K562 (cell line): ENCODE measurements at regions of chr16 and their contacts with region 1.

Region 1: GRCh38 chr16:3509470-3509928 is 8.7 kb downstream of the CLUAP1 start:
- DNase-seq: peak in 1 of 4 experiments; percentile 12
- ATAC-seq: no peak
- H3K4me3 ChIP-seq: no peak overlapping the region
- H3K27ac ChIP-seq: no peak overlapping the region
- H3K4me1 ChIP-seq: peaks cover 2 to 7% of the 10 kb centered on the region in 2 experiments; a peak in 4 of 5 replicates
- H3K27me3 ChIP-seq: no peaks in the 10 kb centered on the region
- CTCF ChIP-seq: no peak
- EP300 ChIP-seq: no peak
- POLR2A ChIP-seq: no peak
- RAD21 ChIP-seq: no peak

Region 2: DNA sequence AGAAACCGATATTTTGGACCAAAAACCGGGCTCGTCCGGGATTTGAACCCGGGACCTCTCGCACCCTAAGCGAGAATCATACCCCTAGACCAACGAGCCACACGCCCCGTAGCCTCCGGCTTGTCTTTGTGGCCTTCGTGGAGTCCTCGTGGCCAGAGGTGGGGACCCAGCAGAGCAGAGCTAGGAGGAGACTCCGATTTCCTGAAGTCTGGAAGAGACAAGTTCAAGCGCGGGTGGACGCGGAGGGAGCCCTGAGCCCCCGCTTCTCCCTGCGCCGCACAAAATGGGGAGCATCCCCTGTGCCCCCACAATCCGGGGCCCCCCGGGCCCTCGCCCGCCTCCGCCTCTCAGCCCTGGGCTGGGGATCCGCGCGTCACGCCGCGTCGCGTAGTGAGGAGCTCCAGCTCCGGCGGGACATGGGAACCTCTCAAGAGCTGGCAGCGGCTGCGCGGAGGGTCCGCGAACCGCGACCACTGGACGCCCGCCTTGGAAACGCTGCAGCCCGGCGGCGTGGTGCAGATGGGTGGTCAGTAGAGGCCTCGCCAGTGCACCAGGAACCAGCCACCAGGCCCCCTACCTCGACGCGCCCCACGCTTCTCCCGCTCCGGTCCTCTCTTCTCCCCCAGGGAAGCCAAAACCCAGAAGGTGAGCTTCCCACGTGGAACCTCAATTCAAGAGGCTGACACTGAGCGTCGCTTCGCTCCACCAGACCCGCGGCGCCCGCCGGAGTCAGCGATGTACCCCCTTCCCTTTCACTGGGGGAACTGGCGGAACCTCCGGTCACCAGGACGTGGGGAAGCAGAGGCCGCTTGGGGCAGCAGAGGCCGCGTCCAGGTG is 326.7 kb before region 1 on chr16:
- CTCF ChIA-PET with region 1: no interaction called
- POLR2A ChIA-PET with region 1: no interaction called
- in situ Hi-C with region 1: no loop called
- intact Hi-C with region 1: loop called (anchors 10 kb)
- DNase-seq: peak; percentile 62 to 86 (median 69)
- ATAC-seq: peak; percentile 86
- H3K4me3 ChIP-seq: peak overlapping the region; percentile 62
- H3K27ac ChIP-seq: peak overlapping the region; percentile 52; the same call in 2 of the 3 replicates
- H3K4me1 ChIP-seq: peaks cover 13 to 31% of the 10 kb centered on the region in 2 experiments; a peak in 4 of 5 replicates
- H3K27me3 ChIP-seq: no peaks in the 10 kb centered on the region
- CTCF ChIP-seq: peak; percentile 62 to 83 (median 74)
- EP300 ChIP-seq: peak; percentile 37
- POLR2A ChIP-seq: 0 out of 2 replicates have a peak, but pooled peaks have one; percentile 38
- RAD21 ChIP-seq: peak in 1 of 2 experiments; percentile 63; a peak in 3 of 4 replicates